ENCODE measurements at regions of chr11 and their contacts with region 1.

Region 1: GRCh38 chr11:118180300-118180703 is 3.9 kb upstream of the SCN2B start:
- DNase-seq: no peak
- ATAC-seq: peak; percentile 78
- H3K4me3 ChIP-seq: no peak overlapping the region
- H3K27ac ChIP-seq: no peak overlapping the region
- H3K4me1 ChIP-seq: peaks cover 5% of the 10 kb centered on the region; the same call in 1 of the 2 replicates
- H3K27me3 ChIP-seq: no peaks in the 10 kb centered on the region
- CTCF ChIP-seq: no peak

Region 2: GRCh38 chr11:117969160-117969991 is 210.9 kb before region 1 on chr11:
- CTCF ChIA-PET with region 1: no interaction called
- POLR2A ChIA-PET with region 1: no interaction called
- in situ Hi-C with region 1: no loop called
- intact Hi-C with region 1: no loop called
- DNase-seq: no peak
- ATAC-seq: no peak
- H3K4me3 ChIP-seq: no peak overlapping the region
- H3K27ac ChIP-seq: no peak overlapping the region
- H3K4me1 ChIP-seq: peaks cover 8% of the 10 kb centered on the region; the same call in 1 of the 2 replicates
- H3K27me3 ChIP-seq: peaks cover 2% of the 10 kb centered on the region; the same call in 1 of the 2 replicates
- CTCF ChIP-seq: no peak

Region 3: DNA sequence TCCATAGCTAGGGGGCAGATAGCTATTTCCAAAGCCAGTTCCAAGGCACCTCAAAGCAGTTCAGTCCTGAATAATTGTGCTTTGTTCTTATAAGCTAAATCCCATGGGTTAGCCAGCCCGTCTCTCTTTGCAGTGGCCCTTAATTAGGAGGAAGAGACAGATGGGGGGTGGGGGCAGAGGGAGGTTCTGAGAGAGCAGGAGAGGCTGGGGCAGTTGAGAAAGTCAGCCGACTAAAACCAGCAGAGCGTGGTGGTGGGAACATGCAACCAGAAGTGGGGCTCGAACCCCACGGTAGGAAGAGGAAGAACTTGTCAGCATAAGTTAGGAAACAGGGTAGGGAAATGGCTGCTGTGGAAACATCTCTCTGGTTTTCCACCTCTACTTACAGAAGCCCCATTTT is 16.8 kb before region 1 on chr11:
- CTCF ChIA-PET with region 1: interaction called, 12 read pairs
- POLR2A ChIA-PET with region 1: no interaction called
- in situ Hi-C with region 1: no loop called
- intact Hi-C with region 1: no loop called
- DNase-seq: no peak
- ATAC-seq: no peak
- H3K4me3 ChIP-seq: no peak overlapping the region
- H3K27ac ChIP-seq: no peak overlapping the region
- H3K4me1 ChIP-seq: no peaks in the 10 kb centered on the region
- H3K27me3 ChIP-seq: peaks cover 17% of the 10 kb centered on the region
- CTCF ChIP-seq: no peak

Region 4: DNA sequence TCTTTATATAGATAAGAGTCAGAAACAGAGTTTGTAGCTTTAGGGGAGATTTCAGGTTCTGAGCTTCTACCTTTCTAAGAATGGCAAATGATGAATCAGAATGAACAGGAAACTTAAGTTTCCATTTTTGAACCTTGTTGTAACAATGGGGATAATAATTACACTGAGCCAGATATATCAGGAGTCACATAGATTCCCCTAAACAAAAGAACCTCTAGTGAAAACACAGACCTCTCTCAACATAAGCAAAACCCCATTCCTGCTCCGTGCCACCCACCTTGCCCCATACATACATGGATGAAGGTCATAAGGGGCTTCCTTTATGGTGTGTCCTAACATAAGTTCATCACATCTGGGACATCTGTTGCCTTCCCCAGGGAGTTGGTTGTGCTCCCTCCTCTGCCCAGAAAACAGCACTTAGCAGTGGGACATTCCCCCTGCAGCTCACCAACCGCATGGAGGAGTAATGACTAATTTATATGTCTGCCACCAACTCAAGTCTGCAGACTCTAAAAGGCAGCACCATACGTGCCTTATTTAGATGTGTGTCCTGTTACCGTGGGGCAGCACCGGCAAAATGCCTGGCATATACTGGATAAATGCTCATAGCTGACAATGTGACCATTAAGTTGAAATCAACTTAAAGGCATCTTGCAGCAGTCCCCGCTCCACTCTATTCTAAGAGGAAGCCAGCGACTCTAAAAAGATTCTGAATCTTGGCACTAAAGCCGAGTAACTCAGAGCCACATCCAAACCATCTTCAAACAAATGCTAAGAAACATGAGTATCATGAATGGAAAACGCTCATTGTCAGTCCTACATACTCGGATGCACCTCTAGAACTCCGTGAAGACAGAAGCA is 36.5 kb after region 1 on chr11:
- CTCF ChIA-PET with region 1: interaction called, 12 read pairs
- POLR2A ChIA-PET with region 1: no interaction called
- in situ Hi-C with region 1: no loop called
- intact Hi-C with region 1: no loop called
- DNase-seq: no peak
- ATAC-seq: no peak
- H3K4me3 ChIP-seq: no peak overlapping the region
- H3K27ac ChIP-seq: no peak overlapping the region
- H3K4me1 ChIP-seq: no peaks in the 10 kb centered on the region
- H3K27me3 ChIP-seq: peaks cover 33% of the 10 kb centered on the region
- CTCF ChIP-seq: no peak

Measured in Panc1 (cell line).